CD4-positive, alpha-beta T cell (primary cell): ENCODE measurements at regions of chr15 and their contacts with region 1.

Region 1: DNA sequence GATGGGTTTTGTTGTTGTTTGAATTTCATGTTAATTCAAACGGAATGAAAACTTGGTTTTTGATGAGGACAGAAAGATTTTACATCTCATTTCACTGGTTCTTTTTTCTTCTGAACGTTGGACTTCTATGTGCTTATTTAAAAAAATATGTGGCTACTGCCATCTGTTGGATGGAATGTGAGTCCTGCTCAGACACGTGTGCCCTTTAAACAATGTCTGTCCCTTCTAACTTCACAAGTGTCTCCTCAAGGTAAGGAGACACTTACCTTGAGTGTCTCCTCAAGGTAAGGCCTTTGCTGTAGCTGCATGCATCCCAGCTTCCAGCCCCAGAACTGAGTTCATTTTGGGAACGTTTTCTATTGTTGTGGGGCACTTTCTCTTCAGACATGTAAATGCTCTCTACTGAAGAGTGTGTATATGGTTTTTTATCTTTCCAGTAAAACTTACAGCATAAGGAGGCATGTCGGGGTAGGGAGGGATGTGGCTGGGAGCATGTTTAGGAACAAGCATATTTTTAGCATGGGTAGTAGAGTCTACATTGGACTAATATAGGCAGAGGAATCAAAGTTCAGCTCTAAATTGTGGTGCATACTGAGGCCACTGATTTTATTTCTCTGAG is 63.1 kb upstream of the UBE3A start:
- DNase-seq: peak in 3 of 14 experiments; percentile 36 to 52 (median 51)
- ATAC-seq: no peak
- H3K4me3 ChIP-seq: no peak overlapping the region
- H3K4me3 Mint-ChIP-seq: no peak overlapping the region
- H3K27ac ChIP-seq: no peak overlapping the region
- H3K27ac Mint-ChIP-seq: no peak overlapping the region
- H3K4me1 ChIP-seq: no peaks in the 10 kb centered on the region
- H3K4me1 Mint-ChIP-seq: no peaks in the 10 kb centered on the region
- H3K27me3 ChIP-seq: peaks cover 0 to 2% of the 10 kb centered on the region in 2 experiments
- H3K27me3 Mint-ChIP-seq: peaks cover 3% of the 10 kb centered on the region
- CTCF ChIP-seq: peak; percentile 55

Region 2: DNA sequence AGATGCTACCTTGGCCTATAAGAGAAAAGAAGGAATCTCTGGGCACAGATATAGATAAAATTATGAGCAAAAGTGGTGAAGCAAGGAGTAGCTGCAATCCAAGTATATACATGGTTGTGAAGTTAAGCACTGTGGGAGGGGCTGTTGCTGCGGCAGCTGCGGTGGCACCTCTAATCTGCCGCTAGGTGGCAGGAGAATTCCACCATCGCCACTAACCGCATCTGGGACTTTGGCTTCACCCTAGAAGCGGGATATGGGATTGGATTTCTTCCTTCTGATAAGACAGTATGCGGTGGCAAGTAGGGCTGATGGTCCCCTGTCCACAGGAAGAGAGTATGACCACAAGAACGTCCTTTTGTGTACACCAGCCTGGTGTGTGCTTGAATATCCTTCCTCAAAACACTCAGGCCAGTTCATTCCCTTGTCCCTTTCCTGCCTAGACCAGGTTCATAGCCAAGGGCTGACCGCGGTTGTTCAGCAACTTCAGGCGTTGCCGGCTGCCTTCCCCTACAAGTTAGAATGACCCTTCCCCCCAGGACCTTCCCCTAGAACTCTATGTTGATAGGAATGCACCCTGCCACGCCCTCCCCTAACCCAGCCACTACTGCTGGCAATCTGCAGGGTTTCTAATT is 1859.4 kb before region 1 on chr15:
- CTCF ChIA-PET with region 1: no interaction called
- POLR2A ChIA-PET with region 1: no interaction called
- intact Hi-C with region 1: loop called in 1 of 2 experiments (anchors 2 kb)
- DNase-seq: peak in 9 of 14 experiments; percentile 2 to 56 (median 23)
- ATAC-seq: no peak
- H3K4me3 ChIP-seq: no peak overlapping the region
- H3K4me3 Mint-ChIP-seq: no peak overlapping the region
- H3K27ac ChIP-seq: no peak overlapping the region
- H3K27ac Mint-ChIP-seq: no peak overlapping the region
- H3K4me1 ChIP-seq: no peaks in the 10 kb centered on the region
- H3K4me1 Mint-ChIP-seq: no peaks in the 10 kb centered on the region
- H3K27me3 ChIP-seq: peaks cover 0 to 2% of the 10 kb centered on the region in 2 experiments
- H3K27me3 Mint-ChIP-seq: peaks cover 19% of the 10 kb centered on the region
- CTCF ChIP-seq: peak; percentile 66

Region 3: GRCh38 chr15:23648920-23649515 is 1852.9 kb before region 1 on chr15:
- CTCF ChIA-PET with region 1: no interaction called
- POLR2A ChIA-PET with region 1: no interaction called
- intact Hi-C with region 1: loop called in 1 of 2 experiments (anchors 2 kb)
- DNase-seq: peak in 5 of 14 experiments; percentile 4 to 37 (median 13)
- ATAC-seq: no peak
- H3K4me3 ChIP-seq: no peak overlapping the region
- H3K4me3 Mint-ChIP-seq: no peak overlapping the region
- H3K27ac ChIP-seq: no peak overlapping the region
- H3K27ac Mint-ChIP-seq: no peak overlapping the region
- H3K4me1 ChIP-seq: no peaks in the 10 kb centered on the region
- H3K4me1 Mint-ChIP-seq: no peaks in the 10 kb centered on the region
- H3K27me3 ChIP-seq: peaks cover 6 to 7% of the 10 kb centered on the region in 2 experiments
- H3K27me3 Mint-ChIP-seq: peaks cover 13% of the 10 kb centered on the region
- CTCF ChIP-seq: peak; percentile 27